Activated CD8-positive, alpha-beta memory T cell treated with anti-CD3 and anti-CD28 coated beads, Interleukin-2, amount 10 ng/mL, durations not matched to agents 7 days and 5 days (primary cell): ENCODE measurements at regions of chr11 and their contacts with region 1.

Region 1: DNA sequence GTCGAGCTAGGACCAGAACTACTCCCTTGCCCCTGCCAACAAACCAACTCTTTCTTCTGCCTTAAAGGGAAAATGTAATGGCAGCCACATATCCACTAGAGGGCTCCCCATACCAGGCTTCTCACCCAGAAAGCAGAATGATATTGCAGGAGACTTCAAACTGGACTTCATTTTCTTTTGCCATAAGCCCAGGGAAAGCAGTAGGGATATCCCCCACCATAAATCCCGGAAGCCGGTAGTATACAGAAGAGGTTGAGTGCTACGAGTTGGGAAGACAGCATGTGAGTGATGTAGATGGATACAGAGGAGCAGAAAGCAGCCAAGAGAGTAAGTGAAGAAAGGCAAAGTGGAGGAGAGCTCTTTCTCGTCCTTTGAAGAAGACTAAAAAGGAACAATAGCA is 12.1 kb downstream of the PLAAT5 start:
- DNase-seq: peak; percentile 65
- ATAC-seq: peak; percentile 79
- H3K4me3 Mint-ChIP-seq: no peak overlapping the region
- H3K27ac Mint-ChIP-seq: no peak overlapping the region
- H3K4me1 Mint-ChIP-seq: no peaks in the 10 kb centered on the region
- H3K27me3 Mint-ChIP-seq: peaks cover 18% of the 10 kb centered on the region

Region 2: GRCh38 chr11:63490551-63491239 is 11.8 kb after region 1 on chr11 and contains the start of gene PLAAT5:
- CTCF ChIA-PET with region 1: interaction called, 16 read pairs
- DNase-seq: no peak
- ATAC-seq: peak; percentile 64
- H3K4me3 Mint-ChIP-seq: peak within 1 kb of the TSS; percentile 71
- H3K27ac Mint-ChIP-seq: no peak within 1 kb of the TSS
- H3K4me1 Mint-ChIP-seq: peaks cover 9% of the 10 kb centered on the region
- H3K27me3 Mint-ChIP-seq: peaks cover 53% of the 10 kb centered on the region
- total RNA-seq, gene PLAAT5: 0.19 to 0.26 TPM

Region 3: DNA sequence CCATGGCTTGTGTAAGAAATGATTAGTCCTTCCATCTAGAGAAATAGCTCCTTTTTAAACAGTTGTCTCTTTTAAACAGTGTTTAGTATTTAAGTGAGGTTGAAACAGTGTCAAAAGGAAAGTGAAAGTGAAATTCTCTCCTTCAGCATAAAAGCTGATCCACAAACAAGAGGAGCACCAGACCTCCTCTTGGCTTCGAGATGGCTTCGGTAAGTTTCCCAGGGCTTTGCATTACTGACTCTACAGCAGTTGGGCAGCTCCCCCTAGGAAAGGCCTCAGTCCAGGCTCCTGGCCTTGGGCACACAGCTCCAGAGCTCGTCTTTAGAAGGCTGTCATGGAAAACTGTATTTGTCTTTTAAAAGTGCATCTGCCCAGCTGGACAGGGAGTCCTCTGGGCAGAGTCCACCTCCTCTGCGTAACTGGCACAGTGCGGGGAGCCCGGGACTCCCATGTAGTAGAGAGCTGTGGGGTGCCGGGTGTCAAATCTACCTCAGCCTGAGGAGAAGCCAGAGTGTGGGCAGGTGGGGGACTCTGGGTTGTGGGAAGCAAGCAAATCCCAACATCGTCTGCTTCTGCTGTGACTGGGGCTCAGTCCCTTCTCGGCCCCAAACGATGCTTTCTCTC is 57.9 kb after region 1 on chr11 and contains the start of gene PLAAT4:
- CTCF ChIA-PET with region 1: interaction called, 23 read pairs
- DNase-seq: peak; percentile 58
- ATAC-seq: peak; percentile 50
- H3K4me3 Mint-ChIP-seq: peak within 1 kb of the TSS; percentile 83
- H3K27ac Mint-ChIP-seq: peak within 1 kb of the TSS; percentile 95
- H3K4me1 Mint-ChIP-seq: peaks cover 71% of the 10 kb centered on the region
- H3K27me3 Mint-ChIP-seq: no peaks in the 10 kb centered on the region
- total RNA-seq, gene PLAAT4: 85.3 to 128 TPM

Region 4: GRCh38 chr11:63629426-63629825 is 150.5 kb after region 1 on chr11:
- CTCF ChIA-PET with region 1: interaction called, 14 read pairs
- DNase-seq: no peak
- ATAC-seq: no peak
- H3K4me3 Mint-ChIP-seq: no peak overlapping the region
- H3K27ac Mint-ChIP-seq: no peak overlapping the region
- H3K4me1 Mint-ChIP-seq: peaks cover 15% of the 10 kb centered on the region
- H3K27me3 Mint-ChIP-seq: no peaks in the 10 kb centered on the region

Region 5: DNA sequence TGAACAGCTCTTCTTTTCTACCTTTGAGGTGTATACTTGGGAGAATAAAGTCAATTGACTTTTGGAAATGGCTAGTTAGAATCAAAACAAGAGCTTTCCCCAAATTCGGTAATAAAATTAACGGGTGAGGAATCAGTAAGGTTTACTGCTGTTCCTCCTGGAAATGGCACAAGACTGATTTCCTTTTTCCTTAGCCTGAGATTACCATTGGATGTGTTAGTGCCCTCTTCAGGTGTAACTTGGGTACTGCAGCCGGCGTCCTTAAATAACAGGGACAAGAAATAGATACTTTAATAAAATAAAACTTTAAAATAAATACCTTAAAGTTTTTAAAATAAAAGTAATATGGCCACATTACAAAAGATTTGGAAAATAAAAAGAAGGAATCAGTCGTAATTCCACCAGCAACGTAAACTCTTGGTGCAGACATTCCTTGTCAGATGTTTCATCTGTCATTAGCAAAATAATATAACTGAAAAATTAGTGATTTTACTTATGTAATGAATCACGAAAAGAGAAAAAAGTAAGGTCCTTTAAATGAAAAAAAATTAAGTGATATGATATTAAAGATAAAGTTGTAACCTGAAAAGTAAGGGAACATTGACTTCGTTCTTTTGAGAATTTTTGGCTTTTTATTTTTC is 259.9 kb after region 1 on chr11:
- CTCF ChIA-PET with region 1: interaction called, 34 read pairs
- DNase-seq: peak; percentile 70
- ATAC-seq: peak; percentile 36
- H3K4me3 Mint-ChIP-seq: no peak overlapping the region
- H3K27ac Mint-ChIP-seq: no peak overlapping the region
- H3K4me1 Mint-ChIP-seq: peaks cover 2% of the 10 kb centered on the region
- H3K27me3 Mint-ChIP-seq: no peaks in the 10 kb centered on the region